Thyroid gland (tissue), 4 donors: ENCODE measurements at regions of chr12 and their contacts with region 1.

Region 1: GRCh38 chr12:66169221-66170170 is at the start of gene TMBIM4:
- DNase-seq: peak; percentile 80 to 86
- H3K4me3 ChIP-seq: peak within 1 kb of the TSS; percentile 49 to 83 (median 58)
- H3K27ac ChIP-seq: peak within 1 kb of the TSS; percentile 96 to 99 (median 96)
- H3K4me1 ChIP-seq: peaks cover 9 to 13% of the 10 kb centered on the region in 2 donors
- H3K27me3 ChIP-seq: no peaks in the 10 kb centered on the region
- CTCF ChIP-seq: peak in 3 of 6 experiments; percentile 14 to 38 (median 23)
- POLR2A ChIP-seq: peak; percentile 3 to 68
- total RNA-seq, gene TMBIM4: 186 to 322 (median 242) TPM

Region 2: DNA sequence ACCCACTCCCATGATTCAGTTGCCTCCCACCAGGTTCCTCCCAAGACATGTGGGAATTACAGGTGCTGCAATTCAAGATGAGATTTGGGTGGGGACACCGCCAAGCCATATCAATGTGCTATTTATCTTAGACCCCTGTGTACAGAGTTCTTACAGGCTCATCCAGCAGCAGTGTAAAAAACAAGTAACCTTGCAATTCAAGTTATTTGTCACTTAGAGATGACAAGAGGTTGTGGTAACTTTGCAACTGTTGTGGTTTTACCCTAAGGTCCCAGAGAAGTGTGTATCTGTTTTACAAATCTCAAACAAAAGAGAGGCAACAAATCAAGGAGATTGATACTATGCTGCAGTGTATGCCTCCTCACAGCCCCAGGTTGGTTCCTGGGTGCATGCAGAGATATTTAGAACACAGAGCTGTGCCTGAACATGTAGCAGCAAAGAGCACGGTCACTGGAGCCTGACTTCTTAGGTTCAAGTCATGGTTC is 121.3 kb after region 1 on chr12:
- intact Hi-C with region 1: loop called (anchors 10 kb)
- DNase-seq: no peak
- H3K4me3 ChIP-seq: no peak overlapping the region
- H3K27ac ChIP-seq: no peak overlapping the region
- H3K4me1 ChIP-seq: no peaks in the 10 kb centered on the region
- H3K27me3 ChIP-seq: no peaks in the 10 kb centered on the region
- CTCF ChIP-seq: no peak
- POLR2A ChIP-seq: no peak

Region 3: GRCh38 chr12:66548338-66549049 is 379.0 kb after region 1 on chr12:
- intact Hi-C with region 1: no loop called
- DNase-seq: no peak
- H3K4me3 ChIP-seq: no peak overlapping the region
- H3K27ac ChIP-seq: no peak overlapping the region
- H3K4me1 ChIP-seq: no peaks in the 10 kb centered on the region
- H3K27me3 ChIP-seq: no peaks in the 10 kb centered on the region
- CTCF ChIP-seq: peak in 1 of 6 experiments; percentile 4
- POLR2A ChIP-seq: no peak